ENCODE measurements at regions of chr4 and their contacts with region 1.

Region 1: GRCh38 chr4:150867148-150867547 is 147.9 kb downstream of the LRBA start:
- DNase-seq: peak; percentile 45
- ATAC-seq: peak; percentile 86
- H3K4me3 Mint-ChIP-seq: no peak overlapping the region
- H3K27ac Mint-ChIP-seq: no peak overlapping the region
- H3K4me1 Mint-ChIP-seq: no peaks in the 10 kb centered on the region
- H3K27me3 Mint-ChIP-seq: no peaks in the 10 kb centered on the region
- CTCF ChIP-seq: peak; percentile 70

Region 2: DNA sequence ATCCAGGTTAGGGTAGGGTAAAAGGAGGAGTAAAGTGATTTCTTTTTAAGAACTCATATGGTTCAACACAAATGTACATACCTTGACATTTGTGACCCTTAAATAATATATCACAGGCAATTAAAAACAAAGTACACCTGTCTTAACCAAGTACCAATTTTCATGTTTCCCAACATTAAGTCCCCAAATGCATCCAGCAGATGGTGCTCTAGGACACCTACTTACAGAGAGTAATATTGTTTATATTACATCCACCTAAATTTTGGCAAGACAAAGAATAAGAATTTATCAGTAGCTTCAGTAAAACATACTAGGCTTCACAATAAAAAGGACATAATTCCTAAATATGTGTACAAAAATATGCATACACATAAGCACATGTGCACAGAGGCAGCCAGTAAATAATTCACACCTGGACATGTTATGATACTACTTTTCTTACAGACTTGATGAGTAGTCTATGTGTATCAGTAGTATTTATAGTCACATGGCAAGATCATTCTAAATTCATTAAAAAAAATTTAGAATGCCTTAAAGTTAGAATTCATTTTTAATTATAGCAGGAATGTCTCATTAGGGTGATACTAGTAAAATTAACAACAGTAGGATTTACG is 569.2 kb before region 1 on chr4:
- CTCF ChIA-PET with region 1: interaction called, 31 read pairs
- POLR2A ChIA-PET with region 1: no interaction called
- intact Hi-C with region 1: loop called (anchors 5 kb)
- DNase-seq: peak; percentile 71
- ATAC-seq: no peak
- H3K4me3 Mint-ChIP-seq: no peak overlapping the region
- H3K27ac Mint-ChIP-seq: no peak overlapping the region
- H3K4me1 Mint-ChIP-seq: peaks cover 10% of the 10 kb centered on the region
- H3K27me3 Mint-ChIP-seq: no peaks in the 10 kb centered on the region
- CTCF ChIP-seq: peak; percentile 73

Region 3: GRCh38 chr4:150828159-150828558 is 39.0 kb before region 1 on chr4:
- CTCF ChIA-PET with region 1: interaction called, 16 read pairs
- POLR2A ChIA-PET with region 1: no interaction called
- intact Hi-C with region 1: no loop called
- DNase-seq: peak; percentile 61
- ATAC-seq: peak; percentile 93
- H3K4me3 Mint-ChIP-seq: no peak overlapping the region
- H3K27ac Mint-ChIP-seq: peak overlapping the region; percentile 78
- H3K4me1 Mint-ChIP-seq: peaks cover 23% of the 10 kb centered on the region
- H3K27me3 Mint-ChIP-seq: no peaks in the 10 kb centered on the region
- CTCF ChIP-seq: no peak

Region 4: DNA sequence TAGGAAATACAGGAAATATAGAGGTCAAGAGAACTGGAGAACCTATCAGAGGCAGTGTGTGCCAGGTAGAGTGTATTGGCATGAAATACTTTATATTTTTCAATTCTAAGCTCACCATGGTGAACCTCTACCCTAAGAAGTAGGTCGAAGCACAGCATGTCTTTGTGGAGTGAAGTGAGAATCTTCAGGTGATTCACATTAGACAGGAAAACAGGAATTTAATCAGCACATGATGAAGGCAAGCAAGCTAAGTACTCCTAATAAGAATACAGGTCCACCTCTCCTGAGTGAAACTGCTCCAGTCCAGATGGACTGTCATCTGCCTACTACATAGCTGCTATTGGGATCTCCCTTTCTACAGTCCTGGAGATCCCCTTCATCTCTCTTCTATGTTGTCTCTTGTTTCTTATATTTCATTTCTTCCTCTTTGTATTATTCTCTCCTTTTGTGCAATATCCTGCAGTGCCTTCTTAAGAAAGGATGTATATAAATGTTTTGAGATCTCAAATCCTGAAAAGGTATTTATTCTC is 11.1 kb before region 1 on chr4:
- CTCF ChIA-PET with region 1: interaction called, 18 read pairs
- POLR2A ChIA-PET with region 1: interaction called, 3 read pairs
- intact Hi-C with region 1: no loop called
- DNase-seq: no peak
- ATAC-seq: no peak
- H3K4me3 Mint-ChIP-seq: no peak overlapping the region
- H3K27ac Mint-ChIP-seq: no peak overlapping the region
- H3K4me1 Mint-ChIP-seq: no peaks in the 10 kb centered on the region
- H3K27me3 Mint-ChIP-seq: no peaks in the 10 kb centered on the region
- CTCF ChIP-seq: no peak

Region 5: DNA sequence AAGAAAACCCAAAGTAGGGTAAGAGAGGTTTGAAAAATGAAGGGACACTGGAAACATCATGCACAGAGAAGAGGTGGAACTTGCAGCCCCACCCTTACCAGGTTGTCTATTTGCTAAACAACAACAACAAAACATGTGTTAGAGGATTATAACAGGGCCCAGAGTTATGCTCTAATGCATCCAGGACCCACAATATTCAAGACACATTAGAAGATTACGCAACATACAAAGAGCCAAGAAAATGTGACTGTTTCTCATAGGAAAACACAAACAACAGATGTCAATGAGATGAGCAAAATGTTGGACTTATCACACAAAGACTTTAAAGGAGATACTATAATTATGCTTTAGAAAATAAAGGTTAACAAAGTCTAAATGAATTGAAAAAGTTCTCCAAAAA is 19.5 kb after region 1 on chr4:
- CTCF ChIA-PET with region 1: interaction called, 11 read pairs
- POLR2A ChIA-PET with region 1: interaction called, 4 read pairs
- intact Hi-C with region 1: no loop called
- DNase-seq: no peak
- ATAC-seq: no peak
- H3K4me3 Mint-ChIP-seq: no peak overlapping the region
- H3K27ac Mint-ChIP-seq: peak overlapping the region; percentile 1
- H3K4me1 Mint-ChIP-seq: peaks cover 35% of the 10 kb centered on the region
- H3K27me3 Mint-ChIP-seq: no peaks in the 10 kb centered on the region
- CTCF ChIP-seq: no peak

Region 6: DNA sequence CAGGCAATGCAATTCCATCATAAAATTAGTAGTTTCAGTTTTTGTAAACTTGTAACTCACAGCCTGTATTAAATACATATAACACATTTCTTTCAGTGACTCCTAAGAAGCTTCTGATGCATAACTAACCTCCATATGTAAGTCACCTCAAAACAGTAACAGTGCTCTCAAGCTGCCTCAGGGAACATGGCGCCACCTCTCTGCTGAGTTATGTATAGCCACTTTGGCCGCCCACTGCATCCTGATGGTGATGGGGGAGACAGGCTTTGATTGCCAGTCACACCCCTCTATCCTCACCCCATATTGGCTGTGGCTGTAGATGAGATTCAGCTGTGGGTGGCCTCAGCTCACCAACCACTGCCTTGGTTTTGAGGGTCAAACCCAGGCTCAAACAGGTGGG is 93.7 kb after region 1 on chr4:
- CTCF ChIA-PET with region 1: interaction called, 12 read pairs
- POLR2A ChIA-PET with region 1: no interaction called
- intact Hi-C with region 1: no loop called
- DNase-seq: peak; percentile 74
- ATAC-seq: peak; percentile 72
- H3K4me3 Mint-ChIP-seq: no peak overlapping the region
- H3K27ac Mint-ChIP-seq: no peak overlapping the region
- H3K4me1 Mint-ChIP-seq: peaks cover 53% of the 10 kb centered on the region
- H3K27me3 Mint-ChIP-seq: no peaks in the 10 kb centered on the region
- CTCF ChIP-seq: peak; percentile 40

Measured in activated CD8-positive, alpha-beta T cell treated with anti-CD3 and anti-CD28 coated beads for 36 hours (primary cell).